ENCODE measurements at regions of chr5 and their contacts with region 1.

Region 1: GRCh38 chr5:167908606-167909005 is 382.8 kb upstream of the WWC1 start:
- DNase-seq: no peak
- H3K4me3 Mint-ChIP-seq: no peak overlapping the region
- H3K27ac Mint-ChIP-seq: no peak overlapping the region
- H3K4me1 Mint-ChIP-seq: no peaks in the 10 kb centered on the region
- H3K27me3 Mint-ChIP-seq: peaks cover 88% of the 10 kb centered on the region
- CTCF ChIP-seq: no peak

Region 2: GRCh38 chr5:167920589-167920988 is 12.0 kb after region 1 on chr5:
- CTCF ChIA-PET with region 1: no interaction called
- intact Hi-C with region 1: no loop called
- DNase-seq: no peak
- H3K4me3 Mint-ChIP-seq: no peak overlapping the region
- H3K27ac Mint-ChIP-seq: no peak overlapping the region
- H3K4me1 Mint-ChIP-seq: no peaks in the 10 kb centered on the region
- H3K27me3 Mint-ChIP-seq: peaks cover 71% of the 10 kb centered on the region
- CTCF ChIP-seq: no peak

Region 3: GRCh38 chr5:167969998-167970397 is 61.4 kb after region 1 on chr5:
- CTCF ChIA-PET with region 1: interaction called, 11 read pairs
- intact Hi-C with region 1: no loop called
- DNase-seq: no peak
- H3K4me3 Mint-ChIP-seq: no peak overlapping the region
- H3K27ac Mint-ChIP-seq: no peak overlapping the region
- H3K4me1 Mint-ChIP-seq: no peaks in the 10 kb centered on the region
- H3K27me3 Mint-ChIP-seq: peaks cover 81% of the 10 kb centered on the region
- CTCF ChIP-seq: no peak

Measured in Calu3 (cell line).